Right ventricle myocardium inferior (tissue), 1 donor: ENCODE measurements at regions of chr4 and their contacts with region 1.

Region 1: GRCh38 chr4:181272422-181272821 is 970.8 kb upstream of the TENM3 start:
- DNase-seq: no peak
- ATAC-seq: peak; percentile 64

Region 2: GRCh38 chr4:181308476-181309170 is 36.2 kb after region 1 on chr4:
- intact Hi-C with region 1: loop called (anchors 5 kb)
- DNase-seq: no peak
- ATAC-seq: no peak